Dorsolateral prefrontal cortex (tissue), 120 donors: ENCODE measurements at regions of chr10 and their contacts with region 1.

Region 1: DNA sequence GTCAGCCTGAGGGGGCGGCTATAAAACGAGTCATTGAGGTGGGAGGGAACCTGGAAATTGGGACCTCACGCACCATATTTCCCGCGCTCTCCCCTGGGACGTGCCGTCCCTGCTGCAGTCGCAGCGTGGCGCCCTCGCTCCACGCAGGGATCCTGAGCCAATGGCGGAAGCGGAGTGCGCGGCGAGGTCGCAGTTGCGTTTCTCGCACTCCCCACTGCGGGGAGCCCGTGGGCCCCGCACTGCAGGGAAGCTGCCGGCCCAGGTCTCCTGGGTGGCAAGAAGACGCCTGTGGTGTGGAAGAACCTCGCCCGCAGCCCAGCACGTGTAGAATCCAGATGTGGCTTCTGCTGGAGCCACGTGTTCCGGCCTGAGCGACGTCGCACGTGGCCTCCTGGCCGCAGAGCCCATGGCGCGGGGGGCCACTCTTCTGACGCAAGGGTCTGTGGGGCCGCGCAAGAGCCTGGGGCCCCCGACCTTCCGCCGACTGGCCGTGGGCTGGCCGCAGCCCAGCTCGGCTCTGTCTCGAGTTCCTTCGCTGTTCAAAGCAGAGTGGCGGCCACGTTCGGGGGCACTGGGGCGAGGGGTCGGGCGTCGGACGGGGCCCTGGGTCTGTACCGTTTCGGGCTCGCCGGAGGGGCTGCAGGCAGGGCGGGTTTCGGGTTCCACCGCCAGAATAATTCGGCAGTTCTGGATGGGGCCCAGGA is 26.4 kb downstream of the HIF1AN start:
- DNase-seq: peak; percentile 22 to 78 (median 62)
- H3K4me3 ChIP-seq: peak overlapping the region in 55 of 59 donors; percentile 5 to 59 (median 41)
- H3K27ac ChIP-seq: no peak overlapping the region
- H3K27me3 ChIP-seq: peaks cover 0 to 47% (median 13%) of the 10 kb centered on the region in 45 donors
- CTCF ChIP-seq: peak; percentile 20 to 93 (median 82)

Region 2: GRCh38 chr10:100346765-100347567 is 215.2 kb before region 1 on chr10 and contains the start of gene SCD:
- intact Hi-C with region 1: no loop called
- DNase-seq: peak; percentile 88 to 98 (median 97)
- H3K4me3 ChIP-seq: peak within 1 kb of the TSS; percentile 61 to 97 (median 89)
- H3K27ac ChIP-seq: peak within 1 kb of the TSS; percentile 40 to 99 (median 97)
- H3K27me3 ChIP-seq: no peaks in the 10 kb centered on the region
- CTCF ChIP-seq: peak in 16 of 56 donors; percentile 3 to 35 (median 12)
- total RNA-seq, gene SCD: 133 to 1,473 (median 374) TPM

Region 3: DNA sequence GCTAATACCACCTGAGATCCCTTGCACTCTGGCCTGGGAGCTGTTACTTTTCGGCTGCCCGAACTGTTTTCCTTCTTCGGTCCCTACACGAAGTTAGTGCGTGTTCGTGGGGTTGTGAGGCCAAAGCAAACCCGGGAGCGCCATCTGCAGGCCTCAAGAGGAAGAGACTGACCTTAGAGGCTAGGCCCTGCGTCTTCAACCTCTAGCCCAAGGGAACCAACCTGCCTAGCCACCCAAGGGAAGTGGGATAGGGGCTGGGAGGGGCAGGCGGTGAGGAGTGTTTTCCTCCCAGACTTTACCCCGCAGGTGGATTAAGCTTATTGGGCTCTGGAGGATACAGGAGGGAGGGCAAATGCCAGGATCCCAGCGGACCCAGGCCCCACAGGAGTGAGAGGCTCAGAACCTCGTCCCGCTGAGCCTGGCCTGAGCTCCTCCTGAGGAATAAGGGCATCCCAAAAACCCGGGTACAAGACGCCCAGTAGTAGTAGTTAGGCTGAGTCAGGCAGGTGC is 181.5 kb after region 1 on chr10:
- intact Hi-C with region 1: loop called in 1 of 2 experiments (anchors 2 kb)
- DNase-seq: peak in 1 of 10 donors; percentile 11
- H3K4me3 ChIP-seq: peak overlapping the region in 11 of 59 donors; percentile 6 to 67 (median 52)
- H3K27ac ChIP-seq: no peak overlapping the region
- H3K27me3 ChIP-seq: peaks cover 26 to 100% (median 99%) of the 10 kb centered on the region in 45 donors
- CTCF ChIP-seq: peak in 54 of 56 donors; percentile 19 to 70 (median 52)

Region 4: GRCh38 chr10:100878291-100878910 is 316.2 kb after region 1 on chr10:
- intact Hi-C with region 1: loop called (anchors 2 kb)
- DNase-seq: peak; percentile 38 to 80 (median 71)
- H3K4me3 ChIP-seq: no peak overlapping the region
- H3K27ac ChIP-seq: peak overlapping the region in 1 of 59 donors; percentile 10
- H3K27me3 ChIP-seq: peaks cover 0 to 7% (median 0%) of the 10 kb centered on the region in 45 donors
- CTCF ChIP-seq: peak; percentile 37 to 87 (median 76)